Mammary epithelial cell (primary cell): ENCODE measurements at regions of chr3 and their contacts with region 1.

Region 1: DNA sequence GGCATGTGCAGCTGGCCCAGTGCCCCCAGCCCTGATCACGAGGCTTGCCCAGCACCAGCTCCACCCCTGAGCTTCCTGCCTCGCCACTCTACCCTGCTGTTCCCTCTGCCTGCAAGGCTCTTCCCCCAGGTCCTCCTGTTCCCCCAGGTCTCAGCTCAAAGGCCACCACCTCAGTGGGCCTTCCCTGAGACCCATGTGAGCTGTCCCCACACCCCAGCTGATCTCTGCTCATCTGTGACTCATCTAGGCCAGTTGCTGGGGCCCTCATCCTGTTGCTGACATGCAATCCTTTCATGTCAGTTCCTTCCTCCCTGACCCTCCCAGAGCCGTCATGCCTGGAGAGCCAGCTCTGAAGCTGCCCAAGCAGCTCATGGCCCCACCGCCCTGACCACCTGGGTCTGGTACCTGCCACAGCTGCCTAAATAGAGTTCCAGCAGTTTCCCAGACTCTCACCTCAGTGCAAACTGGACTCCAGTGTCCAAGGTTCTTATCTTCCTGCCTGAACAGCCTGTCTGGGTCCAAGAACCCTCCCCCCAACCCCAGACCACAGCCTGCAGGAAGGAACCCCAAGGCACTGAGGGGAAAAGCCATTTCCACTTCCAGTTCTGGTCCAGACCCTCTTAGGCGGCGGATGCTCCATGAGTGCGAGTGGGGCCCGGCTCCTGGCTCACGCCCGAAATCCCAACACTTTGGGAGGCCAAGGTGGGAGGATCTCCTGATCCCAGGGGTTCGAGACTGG is 116.6 kb upstream of the IQSEC1 start:
- DNase-seq: peak; percentile 28
- H3K4me3 ChIP-seq: no peak overlapping the region
- H3K27ac ChIP-seq: no peak overlapping the region
- H3K4me1 ChIP-seq: no peaks in the 10 kb centered on the region
- H3K27me3 ChIP-seq: no peaks in the 10 kb centered on the region
- CTCF ChIP-seq: no peak

Region 2: DNA sequence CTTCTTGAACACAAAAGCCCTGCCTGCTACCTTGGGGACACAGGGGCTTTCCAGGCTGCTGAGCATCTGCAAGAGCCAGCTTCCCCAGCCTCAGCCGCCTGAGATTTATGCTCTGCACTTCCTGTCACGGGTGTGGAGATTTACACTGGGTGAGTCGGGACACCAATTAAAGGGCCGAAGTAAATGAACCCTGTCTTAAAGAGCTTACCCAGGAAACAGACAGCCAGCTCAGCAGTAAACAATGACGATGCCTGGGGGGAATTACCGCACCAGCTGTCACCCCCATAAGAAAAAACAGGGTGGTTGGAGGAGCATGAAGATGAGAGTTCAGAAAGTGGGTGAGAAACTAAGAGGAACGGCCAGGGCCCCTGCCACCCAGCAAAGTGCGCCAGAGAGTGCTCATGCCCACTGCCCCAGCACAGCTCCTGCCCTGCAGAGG is 79.1 kb before region 1 on chr3:
- CTCF ChIA-PET with region 1: no interaction called
- dilution Hi-C with region 1: loop called (anchors 5 kb)
- in situ Hi-C with region 1: no loop called
- intact Hi-C with region 1: no loop called
- DNase-seq: peak; percentile 52
- H3K4me3 ChIP-seq: no peak overlapping the region
- H3K27ac ChIP-seq: no peak overlapping the region
- H3K4me1 ChIP-seq: no peaks in the 10 kb centered on the region
- H3K27me3 ChIP-seq: no peaks in the 10 kb centered on the region
- CTCF ChIP-seq: no peak

Region 3: DNA sequence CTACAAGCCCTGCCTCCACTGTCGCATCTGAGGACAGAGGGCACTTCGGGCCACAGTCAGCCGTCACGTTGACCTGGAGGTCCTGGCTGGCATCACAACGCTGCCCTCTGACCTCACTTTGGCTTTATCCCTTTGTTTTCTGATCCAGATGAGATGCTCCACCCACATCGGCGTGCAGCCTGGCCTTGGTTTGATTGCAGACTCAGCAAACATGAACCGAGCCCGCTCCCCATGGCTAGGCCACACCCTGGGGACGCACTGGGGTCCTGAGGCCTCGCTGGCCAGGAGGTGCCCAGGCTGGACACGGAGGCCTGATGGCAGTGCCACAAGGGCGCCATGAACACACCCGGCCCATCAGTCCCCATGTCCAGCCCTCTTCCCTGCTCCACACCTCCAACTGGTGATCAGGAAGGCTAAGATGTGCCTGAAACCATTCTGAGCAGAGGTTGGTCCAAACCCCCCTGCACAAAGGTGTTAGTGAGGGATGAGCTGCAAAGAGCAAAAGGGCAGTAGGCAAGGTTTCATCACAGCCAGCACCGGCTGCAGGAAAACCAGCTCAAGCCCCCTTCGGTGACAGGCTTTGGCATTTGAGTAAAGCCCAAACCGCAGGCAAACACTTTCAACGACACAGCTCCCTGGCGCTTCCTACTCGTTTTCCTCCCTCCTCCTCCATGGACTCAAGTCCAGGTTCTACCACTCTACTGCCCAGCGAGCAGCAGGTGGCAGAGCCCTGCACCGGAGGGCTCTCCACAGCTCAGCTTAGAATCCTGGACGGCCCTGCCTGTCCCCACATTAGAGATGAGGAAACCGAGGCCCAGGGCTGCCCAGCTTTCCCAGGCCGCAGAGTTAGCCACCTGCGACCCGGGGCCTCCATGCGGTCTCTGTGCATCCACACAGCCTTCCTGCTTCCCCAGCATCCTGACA is 64.5 kb after region 1 on chr3:
- CTCF ChIA-PET with region 1: no interaction called
- dilution Hi-C with region 1: loop called (anchors 5 kb)
- in situ Hi-C with region 1: no loop called
- intact Hi-C with region 1: no loop called
- DNase-seq: no peak
- H3K4me3 ChIP-seq: no peak overlapping the region
- H3K27ac ChIP-seq: no peak overlapping the region
- H3K4me1 ChIP-seq: no peaks in the 10 kb centered on the region
- H3K27me3 ChIP-seq: no peaks in the 10 kb centered on the region
- CTCF ChIP-seq: no peak

Region 4: GRCh38 chr3:13795816-13796215 is 606.0 kb after region 1 on chr3:
- CTCF ChIA-PET with region 1: interaction called, 11 read pairs
- dilution Hi-C with region 1: no loop called
- in situ Hi-C with region 1: no loop called
- intact Hi-C with region 1: no loop called
- DNase-seq: no peak
- H3K4me3 ChIP-seq: no peak overlapping the region
- H3K27ac ChIP-seq: no peak overlapping the region
- H3K4me1 ChIP-seq: no peaks in the 10 kb centered on the region
- H3K27me3 ChIP-seq: no peaks in the 10 kb centered on the region
- CTCF ChIP-seq: no peak